GM12878 (cell line): ENCODE measurements at regions of chr4 and their contacts with region 1.

Region 1: DNA sequence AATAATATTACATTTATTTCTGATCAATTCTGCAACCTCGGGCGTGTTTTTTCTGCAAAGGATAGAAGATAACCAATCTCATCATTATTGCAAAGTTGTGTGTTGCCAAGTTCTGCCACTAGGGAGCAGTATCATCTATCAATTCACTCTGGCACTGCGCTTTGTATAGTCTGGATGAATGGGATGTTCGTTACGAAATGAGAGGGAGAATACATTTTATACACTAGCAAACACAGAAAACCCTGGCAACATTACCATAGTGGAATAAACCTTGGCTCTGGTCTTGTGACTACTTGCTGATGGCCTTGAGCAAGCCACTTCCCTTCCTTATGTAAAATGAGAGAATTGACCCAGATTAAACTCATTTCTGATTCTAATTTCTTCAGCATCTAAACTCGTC is 97.5 kb upstream of the ZNF518B start:
- DNase-seq: peak; percentile 31
- ATAC-seq: peak; percentile 94
- H3K4me3 ChIP-seq: no peak overlapping the region
- H3K27ac ChIP-seq: no peak overlapping the region
- H3K4me1 ChIP-seq: no peaks in the 10 kb centered on the region
- H3K27me3 ChIP-seq: no peaks in the 10 kb centered on the region
- CTCF ChIP-seq: peak; percentile 72 to 82 (median 79)
- EP300 ChIP-seq: no peak
- POLR2A ChIP-seq: no peak
- RAD21 ChIP-seq: peak; percentile 84

Region 2: GRCh38 chr4:9608300-9608699 is 946.4 kb before region 1 on chr4:
- CTCF ChIA-PET with region 1: no interaction called
- POLR2A ChIA-PET with region 1: no interaction called
- RAD21 ChIA-PET with region 1: no interaction called
- SMC1A ChIA-PET with region 1: no interaction called
- in situ Hi-C with region 1: no loop called
- intact Hi-C with region 1: no loop called
- DNase-seq: peak; percentile 3
- ATAC-seq: no peak
- H3K4me3 ChIP-seq: no peak overlapping the region
- H3K27ac ChIP-seq: no peak overlapping the region
- H3K4me1 ChIP-seq: no peaks in the 10 kb centered on the region
- H3K27me3 ChIP-seq: no peaks in the 10 kb centered on the region
- CTCF ChIP-seq: no peak
- EP300 ChIP-seq: no peak
- POLR2A ChIP-seq: no peak
- RAD21 ChIP-seq: no peak

Region 3: GRCh38 chr4:9762823-9763475 is 791.7 kb before region 1 on chr4:
- CTCF ChIA-PET with region 1: interaction called, 5 read pairs
- POLR2A ChIA-PET with region 1: no interaction called
- RAD21 ChIA-PET with region 1: no interaction called
- SMC1A ChIA-PET with region 1: no interaction called
- in situ Hi-C with region 1: loop called (anchors 10 kb)
- intact Hi-C with region 1: no loop called
- DNase-seq: peak; percentile 40
- ATAC-seq: peak; percentile 75
- H3K4me3 ChIP-seq: no peak overlapping the region
- H3K27ac ChIP-seq: no peak overlapping the region
- H3K4me1 ChIP-seq: no peaks in the 10 kb centered on the region
- H3K27me3 ChIP-seq: no peaks in the 10 kb centered on the region
- CTCF ChIP-seq: peak; percentile 69 to 88 (median 75)
- EP300 ChIP-seq: no peak
- POLR2A ChIP-seq: no peak
- RAD21 ChIP-seq: peak; percentile 99

Region 4: DNA sequence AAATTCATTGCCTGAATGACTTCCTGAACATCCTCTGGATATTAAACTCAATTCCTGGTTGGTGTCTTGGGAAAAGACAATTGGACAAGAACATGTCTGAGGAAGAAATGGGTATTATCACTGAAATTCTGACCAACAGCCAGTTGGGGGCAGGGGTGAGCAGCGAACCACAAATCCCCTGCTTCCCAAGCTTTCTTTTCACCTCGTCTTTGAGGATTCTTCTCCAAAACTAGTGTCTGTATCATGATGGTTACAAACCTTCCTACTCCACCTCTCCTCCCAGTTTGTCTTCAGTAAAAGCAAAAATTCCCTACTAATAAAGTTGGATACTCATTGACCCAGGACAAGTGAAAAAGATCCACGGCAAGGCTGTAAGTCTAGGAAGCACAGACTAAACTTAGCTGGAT is 389.8 kb before region 1 on chr4:
- CTCF ChIA-PET with region 1: interaction called, 14 read pairs
- POLR2A ChIA-PET with region 1: no interaction called
- RAD21 ChIA-PET with region 1: interaction called, 5 read pairs
- SMC1A ChIA-PET with region 1: interaction called, 12 read pairs
- in situ Hi-C with region 1: loop called (anchors 5 kb)
- intact Hi-C with region 1: no loop called
- DNase-seq: no peak
- ATAC-seq: no peak
- H3K4me3 ChIP-seq: no peak overlapping the region
- H3K27ac ChIP-seq: no peak overlapping the region
- H3K4me1 ChIP-seq: no peaks in the 10 kb centered on the region
- H3K27me3 ChIP-seq: no peaks in the 10 kb centered on the region
- CTCF ChIP-seq: peak; percentile 60 to 63 (median 61)
- EP300 ChIP-seq: no peak
- POLR2A ChIP-seq: no peak
- RAD21 ChIP-seq: peak; percentile 60

Region 5: DNA sequence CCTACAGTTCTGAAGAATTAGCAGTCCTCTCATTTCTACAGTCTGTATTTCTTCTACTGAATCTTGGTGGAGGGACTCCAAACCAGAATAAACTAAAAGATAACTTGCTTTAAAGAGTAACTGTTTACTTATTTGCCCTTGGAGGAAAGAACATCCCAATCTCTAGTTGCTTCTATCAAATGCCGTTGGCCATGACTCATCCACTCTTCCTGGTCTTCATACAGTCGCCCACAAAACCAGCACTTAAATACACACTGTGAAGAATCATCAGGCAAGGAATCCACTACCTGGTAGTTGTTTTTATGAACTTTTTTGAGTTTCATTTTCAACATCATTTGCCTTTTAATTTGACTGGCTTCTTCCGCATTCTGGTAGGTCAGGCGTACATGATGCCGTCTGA is 111.7 kb before region 1 on chr4:
- CTCF ChIA-PET with region 1: no interaction called
- POLR2A ChIA-PET with region 1: no interaction called
- RAD21 ChIA-PET with region 1: no interaction called
- SMC1A ChIA-PET with region 1: no interaction called
- in situ Hi-C with region 1: no loop called
- intact Hi-C with region 1: no loop called
- DNase-seq: no peak
- ATAC-seq: no peak
- H3K4me3 ChIP-seq: no peak overlapping the region
- H3K27ac ChIP-seq: no peak overlapping the region
- H3K4me1 ChIP-seq: no peaks in the 10 kb centered on the region
- H3K27me3 ChIP-seq: no peaks in the 10 kb centered on the region
- CTCF ChIP-seq: no peak
- EP300 ChIP-seq: no peak
- POLR2A ChIP-seq: no peak
- RAD21 ChIP-seq: no peak

Region 6: GRCh38 chr4:10535912-10536311 is 18.8 kb before region 1 on chr4:
- CTCF ChIA-PET with region 1: interaction called, 57 read pairs
- POLR2A ChIA-PET with region 1: no interaction called
- RAD21 ChIA-PET with region 1: interaction called, 3 read pairs
- SMC1A ChIA-PET with region 1: interaction called, 8 read pairs
- in situ Hi-C with region 1: no loop called
- intact Hi-C with region 1: no loop called
- DNase-seq: peak; percentile 38
- ATAC-seq: peak; percentile 91
- H3K4me3 ChIP-seq: no peak overlapping the region
- H3K27ac ChIP-seq: no peak overlapping the region
- H3K4me1 ChIP-seq: peaks cover 16% of the 10 kb centered on the region
- H3K27me3 ChIP-seq: no peaks in the 10 kb centered on the region
- CTCF ChIP-seq: no peak
- EP300 ChIP-seq: peak in 1 of 2 experiments; percentile 53; a peak in 1 of 4 replicates
- POLR2A ChIP-seq: no peak
- RAD21 ChIP-seq: no peak

Region 7: GRCh38 chr4:10582059-10582686 is 27.5 kb after region 1 on chr4:
- CTCF ChIA-PET with region 1: interaction called, 12 read pairs
- POLR2A ChIA-PET with region 1: no interaction called
- RAD21 ChIA-PET with region 1: no interaction called
- SMC1A ChIA-PET with region 1: interaction called, 11 read pairs
- in situ Hi-C with region 1: no loop called
- intact Hi-C with region 1: no loop called
- DNase-seq: no peak
- ATAC-seq: peak; percentile 62; the same call in 2 of the 3 replicates
- H3K4me3 ChIP-seq: no peak overlapping the region
- H3K27ac ChIP-seq: no peak overlapping the region
- H3K4me1 ChIP-seq: peaks cover 21% of the 10 kb centered on the region
- H3K27me3 ChIP-seq: no peaks in the 10 kb centered on the region
- CTCF ChIP-seq: peak; percentile 79 to 91 (median 83)
- EP300 ChIP-seq: no peak
- POLR2A ChIP-seq: no peak
- RAD21 ChIP-seq: peak; percentile 97

Region 8: GRCh38 chr4:10959586-10959985 is 404.9 kb after region 1 on chr4:
- CTCF ChIA-PET with region 1: no interaction called
- POLR2A ChIA-PET with region 1: no interaction called
- RAD21 ChIA-PET with region 1: no interaction called
- SMC1A ChIA-PET with region 1: no interaction called
- in situ Hi-C with region 1: no loop called
- intact Hi-C with region 1: no loop called
- DNase-seq: no peak
- ATAC-seq: no peak
- H3K4me3 ChIP-seq: no peak overlapping the region
- H3K27ac ChIP-seq: no peak overlapping the region
- H3K4me1 ChIP-seq: peaks cover 5% of the 10 kb centered on the region
- H3K27me3 ChIP-seq: no peaks in the 10 kb centered on the region
- CTCF ChIP-seq: no peak
- EP300 ChIP-seq: no peak
- POLR2A ChIP-seq: no peak
- RAD21 ChIP-seq: no peak

Region 9: DNA sequence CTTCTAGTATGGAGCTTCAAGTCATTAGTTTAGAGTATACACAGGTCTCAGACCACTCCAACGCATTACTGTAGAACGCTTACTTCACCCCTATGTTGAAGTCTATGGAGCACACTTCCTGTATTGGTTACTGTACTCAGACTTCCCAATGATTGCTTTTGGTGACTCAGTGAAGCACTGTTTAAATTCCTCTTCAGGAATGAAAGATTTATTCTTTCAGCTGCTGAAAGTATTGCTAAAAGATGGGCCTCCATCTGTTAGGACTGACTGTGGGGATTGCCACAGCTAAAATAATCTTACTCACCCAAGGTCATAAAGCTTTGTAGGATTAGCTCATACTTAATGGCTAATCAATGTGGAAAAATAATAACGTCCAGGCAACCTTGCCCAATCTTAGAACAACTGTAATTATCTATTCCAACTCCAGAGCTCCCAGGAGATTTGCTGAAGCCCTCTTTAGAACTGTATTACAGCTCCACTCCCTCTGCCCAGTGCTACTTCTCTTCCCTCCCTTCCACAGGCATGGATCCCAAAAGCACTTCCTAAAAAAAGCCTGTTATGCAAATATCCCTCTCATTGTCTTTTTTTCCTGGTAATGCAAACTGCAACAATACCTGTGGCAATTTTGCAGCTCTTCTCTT is 1155.9 kb after region 1 on chr4:
- CTCF ChIA-PET with region 1: no interaction called
- POLR2A ChIA-PET with region 1: no interaction called
- RAD21 ChIA-PET with region 1: no interaction called
- SMC1A ChIA-PET with region 1: no interaction called
- in situ Hi-C with region 1: loop called (anchors 10 kb)
- intact Hi-C with region 1: no loop called
- DNase-seq: no peak
- ATAC-seq: no peak
- H3K4me3 ChIP-seq: no peak overlapping the region
- H3K27ac ChIP-seq: no peak overlapping the region
- H3K4me1 ChIP-seq: no peaks in the 10 kb centered on the region
- H3K27me3 ChIP-seq: no peaks in the 10 kb centered on the region
- CTCF ChIP-seq: no peak
- EP300 ChIP-seq: no peak
- POLR2A ChIP-seq: no peak
- RAD21 ChIP-seq: no peak